ENCODE measurements at regions of chr15 and their contacts with region 1.

Region 1: DNA sequence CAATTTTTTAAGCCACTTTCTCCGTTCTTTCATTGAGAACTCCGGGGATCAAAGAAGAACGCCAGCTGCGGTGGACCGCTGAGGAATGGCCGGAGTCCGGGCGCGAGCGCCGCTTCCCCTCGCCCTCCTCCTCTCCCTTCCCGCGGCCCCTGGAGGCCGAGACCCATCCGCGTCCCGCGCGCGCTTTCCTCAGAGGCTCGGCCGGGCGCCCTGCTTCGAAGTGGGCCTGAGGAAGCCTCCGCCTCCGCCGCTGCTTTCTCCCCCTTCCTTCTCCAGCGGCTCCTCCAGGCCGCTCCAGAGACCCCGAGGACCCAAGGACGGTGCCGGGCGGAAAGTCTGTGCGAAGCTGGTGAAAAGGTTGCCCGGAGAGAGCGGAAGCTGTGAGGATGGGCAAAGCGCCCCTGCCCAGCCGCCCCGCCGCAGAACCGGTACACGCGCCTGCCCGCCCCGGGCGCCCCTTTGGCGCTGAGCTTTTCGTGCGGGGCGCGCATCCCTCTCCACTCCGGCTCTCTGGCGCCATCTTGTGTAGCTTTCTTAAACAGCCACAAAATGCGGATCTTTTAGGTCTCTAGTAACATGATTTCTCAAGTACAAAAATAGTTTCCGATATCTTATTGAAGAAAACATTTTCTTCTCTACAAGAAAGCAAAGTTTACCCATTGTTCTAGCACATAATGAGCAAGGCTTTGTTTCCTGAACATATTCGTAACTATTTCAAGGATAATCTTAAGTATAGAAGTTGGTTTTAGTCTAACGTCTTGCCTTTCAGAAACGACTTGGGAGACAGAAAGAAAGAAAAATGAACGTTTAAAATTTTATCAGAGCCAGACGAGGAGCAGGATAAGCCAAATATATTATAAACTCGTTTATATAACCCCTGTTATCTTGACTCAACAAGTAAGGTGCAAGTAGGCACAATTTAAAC is 59.2 kb upstream of the FAM174B start:
- DNase-seq: peak; percentile 76
- ATAC-seq: peak; percentile 93
- H3K4me3 Mint-ChIP-seq: peak overlapping the region; percentile 11
- H3K27ac Mint-ChIP-seq: no peak overlapping the region
- H3K4me1 Mint-ChIP-seq: peaks cover 8% of the 10 kb centered on the region
- H3K27me3 Mint-ChIP-seq: peaks cover 17% of the 10 kb centered on the region

Region 2: DNA sequence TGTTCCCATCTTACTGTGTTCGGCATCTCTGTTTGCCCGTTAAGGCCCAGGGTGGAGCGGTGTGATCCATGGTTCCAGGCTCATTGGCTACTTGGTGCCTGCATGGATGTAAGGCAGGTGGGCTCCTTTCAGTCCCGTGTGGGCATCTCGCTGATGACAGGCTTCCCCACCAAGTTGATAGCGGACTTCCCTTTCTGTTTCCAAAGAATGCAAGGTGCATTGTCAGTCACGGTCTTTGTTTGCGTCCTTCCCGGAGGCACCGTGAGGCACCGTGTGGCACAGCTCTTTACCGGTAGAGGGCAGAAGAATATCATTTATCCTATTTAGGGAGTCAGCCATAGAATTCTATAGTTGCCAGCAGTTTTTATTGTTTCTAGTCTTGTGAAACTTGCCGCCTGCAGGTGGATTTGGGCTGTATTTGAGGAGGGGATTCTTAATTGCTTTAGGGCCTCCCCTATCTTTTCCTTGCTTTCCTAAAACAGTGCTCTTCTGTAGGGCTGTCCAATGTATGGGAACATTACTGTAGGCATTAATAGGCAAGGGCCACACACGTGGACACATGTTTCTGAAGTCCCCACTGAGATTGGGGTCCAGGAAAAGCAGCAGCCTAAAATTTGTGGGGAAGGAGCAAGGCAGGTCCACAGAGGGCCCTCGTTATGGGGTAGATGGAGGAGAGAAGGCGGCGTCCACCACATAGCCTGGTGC is 617.1 kb before region 1 on chr15:
- CTCF ChIA-PET with region 1: interaction called, 26 read pairs
- DNase-seq: peak; percentile 72
- ATAC-seq: peak; percentile 72
- H3K4me3 Mint-ChIP-seq: no peak overlapping the region
- H3K27ac Mint-ChIP-seq: peak overlapping the region; percentile 34
- H3K4me1 Mint-ChIP-seq: peaks cover 55% of the 10 kb centered on the region
- H3K27me3 Mint-ChIP-seq: no peaks in the 10 kb centered on the region

Region 3: DNA sequence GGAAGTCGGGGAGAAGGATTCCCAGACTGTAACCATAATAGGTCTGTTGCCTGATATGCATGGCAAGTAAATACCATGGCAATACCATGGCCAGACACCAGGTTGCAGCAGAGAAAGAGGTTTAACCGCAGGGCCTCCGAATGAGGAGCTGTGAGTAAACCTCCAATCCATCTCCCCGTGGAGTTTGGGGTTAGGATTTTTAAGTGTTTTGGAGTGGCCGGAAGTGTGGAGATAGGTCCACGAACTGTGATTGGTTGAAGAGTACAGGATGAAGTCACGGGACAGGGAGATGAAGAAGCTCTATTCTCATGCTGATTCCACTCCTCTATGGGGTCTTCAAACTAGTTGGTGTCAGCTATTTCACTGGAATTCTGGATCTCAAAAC is 193.1 kb before region 1 on chr15:
- CTCF ChIA-PET with region 1: interaction called, 34 read pairs
- DNase-seq: peak; percentile 72
- ATAC-seq: peak; percentile 65
- H3K4me3 Mint-ChIP-seq: no peak overlapping the region
- H3K27ac Mint-ChIP-seq: no peak overlapping the region
- H3K4me1 Mint-ChIP-seq: peaks cover 4% of the 10 kb centered on the region
- H3K27me3 Mint-ChIP-seq: peaks cover 6% of the 10 kb centered on the region

Region 4: GRCh38 chr15:92733934-92734521 is 19.3 kb after region 1 on chr15:
- CTCF ChIA-PET with region 1: interaction called, 10 read pairs
- DNase-seq: peak; percentile 43
- ATAC-seq: peak; percentile 80
- H3K4me3 Mint-ChIP-seq: peak overlapping the region; percentile 75
- H3K27ac Mint-ChIP-seq: peak overlapping the region; percentile 43
- H3K4me1 Mint-ChIP-seq: peaks cover 10% of the 10 kb centered on the region
- H3K27me3 Mint-ChIP-seq: peaks cover 11% of the 10 kb centered on the region

Measured in activated CD8-positive, alpha-beta memory T cell treated with anti-CD3 and anti-CD28 coated beads, Interleukin-2, amount 10 ng/mL, durations not matched to agents 7 days and 5 days (primary cell).